ENCODE measurements at regions of chr6 and their contacts with region 1.

Region 1: DNA sequence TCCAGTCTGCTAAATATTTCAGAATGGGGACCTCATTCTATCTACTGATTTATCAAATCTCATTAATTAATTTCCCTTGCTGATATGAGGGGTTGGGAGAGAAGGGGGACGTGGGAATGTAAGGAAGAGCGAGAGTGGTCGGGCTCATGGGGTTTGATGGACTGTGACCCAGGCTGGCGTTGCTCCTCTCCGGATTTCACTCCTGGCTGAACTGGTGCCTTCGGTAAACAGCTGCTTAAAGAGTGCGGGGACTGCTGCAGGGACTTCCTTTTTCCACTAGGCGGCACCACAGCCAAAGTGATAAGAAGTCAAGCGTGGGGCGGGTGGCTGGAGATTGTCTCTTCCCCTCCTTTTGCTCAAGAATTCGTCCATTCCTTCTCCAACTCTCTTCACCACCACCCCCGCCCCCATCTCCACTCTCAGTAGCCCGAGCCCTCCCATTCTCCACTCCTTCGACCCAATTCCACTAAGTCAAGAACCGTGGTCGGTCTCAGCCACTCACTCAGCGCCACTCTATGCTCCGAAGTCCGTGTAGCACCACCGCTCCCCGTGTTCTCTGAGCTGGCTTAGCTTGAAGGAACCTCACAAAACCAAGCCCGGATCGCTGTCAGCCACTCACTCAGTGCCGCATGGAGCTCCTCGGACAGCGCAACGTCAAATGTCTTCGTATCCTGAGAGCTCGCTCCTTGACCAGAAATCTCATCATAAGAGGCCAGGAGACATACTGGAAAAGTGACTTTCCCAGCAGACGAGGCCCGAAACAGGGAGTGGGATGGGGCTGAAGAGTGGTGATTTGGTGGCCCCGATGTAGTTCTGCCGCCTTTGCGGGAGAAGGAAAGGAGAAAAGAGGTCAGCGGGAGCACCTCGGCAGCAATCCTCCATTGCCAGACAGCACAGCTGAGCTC is 9.7 kb downstream of the TRIM31 start:
- DNase-seq: peak; percentile 88 to 93 (median 88)
- ATAC-seq: peak; percentile 87
- H3K4me3 ChIP-seq: no peak overlapping the region
- H3K27ac ChIP-seq: no peak overlapping the region
- H3K4me1 ChIP-seq: peaks cover 25 to 34% of the 10 kb centered on the region in 2 experiments
- H3K27me3 ChIP-seq: peaks cover 17 to 29% of the 10 kb centered on the region in 2 experiments; a peak in 4 of 5 replicates
- CTCF ChIP-seq: peak; percentile 96 to 98 (median 98)
- EP300 ChIP-seq: no peak
- POLR2A ChIP-seq: peak; percentile 35; the same call in 1 of the 2 replicates
- RAD21 ChIP-seq: peak; percentile 89 to 92

Region 2: GRCh38 chr6:29887819-29888776 is 215.1 kb before region 1 on chr6:
- CTCF ChIA-PET with region 1: no interaction called
- POLR2A ChIA-PET with region 1: no interaction called
- in situ Hi-C with region 1: no loop called
- intact Hi-C with region 1: no loop called
- DNase-seq: no peak
- ATAC-seq: peak; percentile 44; the same call in 2 of the 3 replicates
- H3K4me3 ChIP-seq: no peak overlapping the region
- H3K27ac ChIP-seq: no peak overlapping the region
- H3K4me1 ChIP-seq: peaks cover 0 to 15% of the 10 kb centered on the region in 2 experiments; a peak in 1 of 5 replicates
- H3K27me3 ChIP-seq: peaks cover 9 to 21% of the 10 kb centered on the region in 2 experiments; a peak in 3 of 5 replicates
- CTCF ChIP-seq: no peak
- EP300 ChIP-seq: no peak
- POLR2A ChIP-seq: no peak
- RAD21 ChIP-seq: no peak

Region 3: DNA sequence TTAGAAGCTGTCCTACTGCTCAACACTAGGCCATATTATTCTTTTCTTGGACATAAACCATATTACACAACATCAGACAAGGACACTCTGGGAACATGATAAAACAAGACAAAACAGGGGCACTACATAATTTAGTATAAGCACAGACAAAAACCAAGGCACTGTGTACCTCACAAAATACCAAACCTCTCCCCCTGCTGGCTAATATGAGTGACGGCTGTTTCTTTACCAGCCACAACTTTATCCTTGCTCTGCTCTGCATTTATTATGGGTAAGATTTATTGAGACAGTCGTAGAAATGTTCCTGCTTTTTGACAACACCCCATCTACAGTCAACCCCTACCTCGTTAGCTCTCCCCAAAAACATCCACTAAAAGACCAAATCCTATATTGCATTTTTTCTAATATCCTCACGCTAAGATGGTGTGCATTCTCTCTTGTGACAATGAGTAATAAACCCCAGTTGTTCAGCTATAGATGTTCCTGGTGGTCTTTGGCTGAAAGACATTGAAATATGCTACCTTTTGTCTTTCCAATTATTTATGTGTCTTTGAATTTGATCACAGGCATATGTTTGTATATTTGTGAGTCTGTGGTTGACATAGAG is 65.9 kb before region 1 on chr6:
- CTCF ChIA-PET with region 1: no interaction called
- POLR2A ChIA-PET with region 1: no interaction called
- in situ Hi-C with region 1: no loop called
- intact Hi-C with region 1: no loop called
- DNase-seq: peak; percentile 20 to 50 (median 44)
- ATAC-seq: peak; percentile 89
- H3K4me3 ChIP-seq: no peak overlapping the region
- H3K27ac ChIP-seq: no peak overlapping the region
- H3K4me1 ChIP-seq: no peaks in the 10 kb centered on the region
- H3K27me3 ChIP-seq: no peaks in the 10 kb centered on the region
- CTCF ChIP-seq: peak; percentile 55 to 62 (median 61)
- EP300 ChIP-seq: no peak
- POLR2A ChIP-seq: no peak
- RAD21 ChIP-seq: peak in 1 of 2 experiments; percentile 43; a peak in 1 of 4 replicates

Region 4: GRCh38 chr6:30066577-30067459 is 36.4 kb before region 1 on chr6 and contains the start of gene PPP1R11:
- CTCF ChIA-PET with region 1: no interaction called
- POLR2A ChIA-PET with region 1: interaction called, 3 read pairs
- in situ Hi-C with region 1: no loop called
- intact Hi-C with region 1: loop called (anchors 2 kb)
- DNase-seq: peak; percentile 95 to 100 (median 96)
- ATAC-seq: peak; percentile 99
- H3K4me3 ChIP-seq: peak within 1 kb of the TSS; percentile 71
- H3K27ac ChIP-seq: peak within 1 kb of the TSS; percentile 88
- H3K4me1 ChIP-seq: peaks cover 7% of the 10 kb centered on the region in 2 experiments; a peak in 4 of 5 replicates
- H3K27me3 ChIP-seq: no peaks in the 10 kb centered on the region
- CTCF ChIP-seq: no peak; a peak in 1 of 6 replicates
- EP300 ChIP-seq: peak; percentile 57; the same call in 1 of the 2 replicates
- POLR2A ChIP-seq: peak; percentile 93
- RAD21 ChIP-seq: no peak
- polyA plus RNA-seq, gene PPP1R11: 17.8 to 30.9 TPM

Region 5: GRCh38 chr6:30130887-30131862 is 28.0 kb after region 1 on chr6:
- CTCF ChIA-PET with region 1: interaction called, 66 read pairs
- POLR2A ChIA-PET with region 1: interaction called, 5 read pairs
- in situ Hi-C with region 1: no loop called
- intact Hi-C with region 1: loop called (anchors 1 kb)
- DNase-seq: peak; percentile 81 to 89 (median 86)
- ATAC-seq: peak; percentile 97
- H3K4me3 ChIP-seq: no peak overlapping the region
- H3K27ac ChIP-seq: no peak overlapping the region
- H3K4me1 ChIP-seq: peaks cover 4 to 8% of the 10 kb centered on the region in 2 experiments; a peak in 4 of 5 replicates
- H3K27me3 ChIP-seq: peaks cover 8 to 30% of the 10 kb centered on the region in 2 experiments; a peak in 3 of 5 replicates
- CTCF ChIP-seq: peak; percentile 100
- EP300 ChIP-seq: peak; percentile 9; the same call in 1 of the 2 replicates
- POLR2A ChIP-seq: no peak
- RAD21 ChIP-seq: peak; percentile 89 to 96

Region 6: GRCh38 chr6:30154709-30155519 is 51.7 kb after region 1 on chr6:
- CTCF ChIA-PET with region 1: no interaction called
- POLR2A ChIA-PET with region 1: no interaction called
- in situ Hi-C with region 1: no loop called
- intact Hi-C with region 1: no loop called
- DNase-seq: no peak
- ATAC-seq: no peak
- H3K4me3 ChIP-seq: no peak overlapping the region
- H3K27ac ChIP-seq: no peak overlapping the region
- H3K4me1 ChIP-seq: peaks cover 4 to 34% of the 10 kb centered on the region in 2 experiments
- H3K27me3 ChIP-seq: peaks cover 0 to 18% of the 10 kb centered on the region in 2 experiments; a peak in 3 of 5 replicates
- CTCF ChIP-seq: no peak
- EP300 ChIP-seq: no peak
- POLR2A ChIP-seq: no peak
- RAD21 ChIP-seq: no peak

Region 7: DNA sequence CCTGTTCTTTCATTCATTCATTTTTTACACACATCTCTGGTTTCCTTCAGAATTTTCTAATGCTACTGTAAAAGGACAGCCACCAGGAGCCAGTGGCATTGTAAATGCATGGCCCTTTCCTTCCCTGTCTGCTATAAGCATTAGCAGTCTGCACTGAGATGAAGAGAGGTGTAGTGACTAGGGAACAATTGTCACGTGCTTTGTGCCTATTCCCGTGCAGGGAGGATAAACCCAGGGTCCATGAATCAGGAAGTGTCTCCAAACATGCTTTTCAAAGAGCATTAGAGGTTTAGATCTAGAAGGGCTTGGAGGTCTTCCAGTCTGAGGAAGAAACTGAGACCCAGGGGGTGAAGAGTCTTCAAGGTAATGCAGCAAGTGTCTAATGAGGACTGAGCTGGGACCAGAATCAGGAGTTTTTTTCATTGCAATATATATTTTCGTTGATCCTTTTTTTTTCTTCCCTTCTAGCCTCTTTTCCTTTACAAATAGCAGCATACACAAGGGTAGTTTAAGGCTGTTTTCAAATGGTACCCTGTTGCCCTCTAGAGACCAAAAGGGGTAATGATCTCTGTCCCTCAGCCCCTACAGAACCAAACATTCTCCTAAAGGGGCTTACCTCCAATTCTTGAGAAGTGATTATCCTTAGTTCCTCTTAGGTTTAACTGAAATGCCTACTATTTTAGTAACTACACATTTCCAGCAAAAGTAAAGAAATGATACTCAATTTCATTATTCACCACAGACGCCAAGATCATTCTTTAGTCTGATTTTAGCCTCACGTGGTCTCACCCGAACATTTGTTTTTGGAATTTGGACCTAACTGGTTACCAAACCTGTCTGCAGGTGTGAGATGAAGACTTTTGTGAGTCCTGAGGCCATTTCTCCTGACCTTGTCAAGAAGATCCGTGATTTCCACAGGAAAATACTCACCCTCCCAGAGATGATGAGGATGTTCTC is 66.7 kb after region 1 on chr6:
- CTCF ChIA-PET with region 1: interaction called, 14 read pairs
- POLR2A ChIA-PET with region 1: no interaction called
- in situ Hi-C with region 1: no loop called
- intact Hi-C with region 1: loop called (anchors 1 kb)
- DNase-seq: peak; percentile 59 to 73 (median 65)
- ATAC-seq: peak; percentile 97
- H3K4me3 ChIP-seq: no peak overlapping the region
- H3K27ac ChIP-seq: no peak overlapping the region
- H3K4me1 ChIP-seq: peaks cover 0 to 8% of the 10 kb centered on the region in 2 experiments; a peak in 1 of 5 replicates
- H3K27me3 ChIP-seq: peaks cover 10 to 27% of the 10 kb centered on the region in 2 experiments
- CTCF ChIP-seq: peak; percentile 73 to 94 (median 82)
- EP300 ChIP-seq: no peak
- POLR2A ChIP-seq: no peak
- RAD21 ChIP-seq: peak; percentile 82 to 92

Region 8: GRCh38 chr6:30656513-30656912 is 553.3 kb after region 1 on chr6:
- CTCF ChIA-PET with region 1: no interaction called
- POLR2A ChIA-PET with region 1: no interaction called
- in situ Hi-C with region 1: no loop called
- intact Hi-C with region 1: no loop called
- DNase-seq: no peak
- ATAC-seq: no peak
- H3K4me3 ChIP-seq: no peak overlapping the region
- H3K27ac ChIP-seq: no peak overlapping the region
- H3K4me1 ChIP-seq: no peaks in the 10 kb centered on the region; a peak in 1 of 5 replicates
- H3K27me3 ChIP-seq: no peaks in the 10 kb centered on the region
- CTCF ChIP-seq: no peak
- EP300 ChIP-seq: no peak
- POLR2A ChIP-seq: no peak
- RAD21 ChIP-seq: no peak